AG04449 (cell line): ENCODE measurements at regions of chr11 and their contacts with region 1.

Region 1: DNA sequence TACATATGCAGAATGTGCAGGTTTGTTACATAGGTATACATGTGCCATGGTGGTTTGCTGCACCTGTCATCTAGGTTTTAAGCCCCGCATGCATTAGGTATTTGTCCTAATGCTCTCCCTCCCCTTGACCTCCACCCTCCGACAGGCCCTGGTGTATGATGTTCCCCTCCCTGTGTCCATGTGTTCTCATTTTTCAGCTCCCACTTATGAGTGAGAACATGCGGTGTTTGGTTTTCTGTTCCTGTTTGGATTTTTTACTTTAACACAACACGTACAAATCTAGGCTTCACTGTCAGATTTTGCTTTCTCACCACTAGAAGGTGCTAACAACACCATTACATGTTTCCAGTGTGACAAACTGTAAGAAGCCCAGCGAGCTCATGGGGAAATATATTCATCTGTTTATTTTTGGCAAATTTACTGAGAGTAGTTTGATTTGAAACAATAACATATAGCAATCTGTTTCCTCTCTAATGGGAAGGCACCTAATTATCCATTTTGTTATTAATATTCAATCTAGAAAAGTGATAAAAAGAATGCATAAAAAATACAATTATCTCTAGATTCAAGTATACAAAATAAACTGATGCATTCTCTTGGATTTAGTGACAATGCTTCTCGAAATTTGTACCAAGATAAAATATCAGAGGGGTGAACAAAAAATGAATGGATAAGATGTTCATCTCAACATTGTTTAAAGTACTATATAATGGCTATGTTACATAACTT is 23.2 kb upstream of the BIRC3 start:
- DNase-seq: no peak
- H3K4me3 ChIP-seq: no peak overlapping the region
- CTCF ChIP-seq: peak; percentile 55

Region 2: DNA sequence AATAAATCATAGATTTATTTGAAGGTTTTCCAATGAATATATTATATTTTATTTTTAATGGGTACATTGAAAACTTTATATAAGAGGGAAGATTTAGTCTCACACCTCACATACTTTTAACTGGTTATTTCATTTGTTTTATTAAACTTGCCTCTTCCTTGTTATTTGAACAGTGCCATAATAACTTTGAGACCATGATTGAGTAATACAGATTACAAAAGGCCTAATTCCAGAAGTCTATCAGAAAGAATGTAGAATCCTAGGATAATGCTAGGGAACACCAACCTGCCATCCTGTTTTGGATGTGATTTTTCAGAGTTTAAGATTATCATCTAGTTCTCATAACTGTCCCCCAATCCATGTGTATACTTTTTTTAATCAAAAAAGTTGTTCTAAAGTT is 79.4 kb before region 1 on chr11:
- CTCF ChIA-PET with region 1: no interaction called
- POLR2A ChIA-PET with region 1: no interaction called
- DNase-seq: no peak
- H3K4me3 ChIP-seq: no peak overlapping the region
- CTCF ChIP-seq: no peak

Region 3: DNA sequence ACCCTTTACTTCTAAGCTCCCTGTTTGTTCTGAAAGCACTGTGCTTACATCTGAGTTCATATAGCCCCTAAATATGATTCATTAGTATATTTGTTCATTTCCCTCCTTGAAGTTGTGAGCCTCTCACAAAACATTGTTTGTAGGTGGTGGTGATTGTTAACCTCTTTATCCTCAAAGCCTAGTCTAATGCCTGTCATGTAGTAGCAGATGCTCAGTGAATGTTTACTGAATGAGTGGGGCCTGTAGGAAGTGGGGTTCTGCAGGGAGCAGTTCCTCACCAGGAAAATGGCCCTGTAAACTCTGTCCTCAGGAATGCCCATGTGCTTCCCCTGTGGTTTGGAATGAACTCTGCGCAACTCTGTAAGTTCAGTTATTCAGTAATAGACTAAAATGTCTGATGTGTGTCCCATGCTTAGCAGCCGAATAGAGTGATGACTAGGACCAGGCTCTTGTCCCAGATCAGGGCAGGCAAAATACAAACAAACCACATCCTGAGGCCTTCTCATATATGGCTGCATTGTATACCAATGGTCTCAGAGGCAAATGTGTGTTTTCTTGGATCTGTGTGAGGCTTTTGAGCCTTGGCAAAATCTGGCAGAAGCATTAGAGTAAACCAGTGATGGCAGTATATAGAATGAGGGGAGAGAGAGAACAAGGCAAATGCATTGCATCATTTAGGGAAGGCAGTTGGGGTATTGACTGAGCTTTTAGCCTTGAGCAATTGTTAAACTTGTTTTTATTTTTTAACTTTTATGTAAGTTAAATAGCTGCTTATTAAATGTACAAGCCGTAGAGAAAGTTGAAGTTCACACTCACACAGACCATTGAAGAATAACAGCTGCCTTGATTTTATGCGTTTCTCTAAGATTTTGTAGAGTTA is 68.1 kb before region 1 on chr11:
- CTCF ChIA-PET with region 1: no interaction called
- POLR2A ChIA-PET with region 1: no interaction called
- DNase-seq: peak; percentile 92
- H3K4me3 ChIP-seq: no peak overlapping the region
- CTCF ChIP-seq: no peak

Region 4: DNA sequence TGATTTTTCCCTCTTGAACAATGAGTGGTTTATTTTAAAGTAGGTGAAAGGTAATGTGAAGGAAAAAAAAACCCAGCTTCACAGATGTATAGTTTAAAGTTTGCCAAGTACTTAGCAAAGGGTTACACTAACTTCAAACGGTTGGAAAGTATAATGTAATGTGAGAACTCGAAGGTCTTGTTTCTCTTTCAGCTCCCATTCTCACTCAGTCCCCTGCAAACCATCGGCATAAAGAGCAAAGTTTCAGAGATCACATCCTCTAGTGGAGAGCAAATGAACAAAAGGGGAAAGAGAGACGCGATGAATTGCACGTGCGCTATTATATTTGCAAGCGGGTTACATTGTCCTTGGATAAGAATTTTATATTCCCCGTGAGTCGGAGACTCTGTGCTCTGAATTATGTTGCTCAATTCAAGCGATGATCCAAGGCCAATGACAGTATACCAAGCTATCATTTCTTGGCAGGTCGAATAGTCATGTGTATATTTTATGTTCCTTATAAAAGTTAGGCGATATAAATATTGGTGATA is 14.3 kb before region 1 on chr11:
- CTCF ChIA-PET with region 1: interaction called, 54 read pairs
- POLR2A ChIA-PET with region 1: no interaction called
- DNase-seq: no peak
- H3K4me3 ChIP-seq: no peak overlapping the region
- CTCF ChIP-seq: peak; percentile 28

Region 5: GRCh38 chr11:102306048-102306585 is 12.1 kb after region 1 on chr11:
- CTCF ChIA-PET with region 1: interaction called, 46 read pairs
- POLR2A ChIA-PET with region 1: no interaction called
- DNase-seq: no peak
- H3K4me3 ChIP-seq: no peak overlapping the region
- CTCF ChIP-seq: no peak

Region 6: GRCh38 chr11:102346748-102347461 is 52.9 kb after region 1 on chr11 and contains the start of gene BIRC2:
- CTCF ChIA-PET with region 1: interaction called, 57 read pairs
- POLR2A ChIA-PET with region 1: no interaction called
- DNase-seq: no peak
- H3K4me3 ChIP-seq: peak within 1 kb of the TSS; percentile 82
- CTCF ChIP-seq: peak; percentile 94

Region 7: GRCh38 chr11:102476812-102477211 is 182.8 kb after region 1 on chr11:
- CTCF ChIA-PET with region 1: no interaction called
- POLR2A ChIA-PET with region 1: no interaction called
- DNase-seq: no peak
- H3K4me3 ChIP-seq: no peak overlapping the region
- CTCF ChIP-seq: no peak

Region 8: GRCh38 chr11:102495161-102496042 is 201.4 kb after region 1 on chr11:
- CTCF ChIA-PET with region 1: interaction called, 27 read pairs
- POLR2A ChIA-PET with region 1: no interaction called
- DNase-seq: peak; percentile 67
- H3K4me3 ChIP-seq: no peak overlapping the region
- CTCF ChIP-seq: peak; percentile 46

Region 9: DNA sequence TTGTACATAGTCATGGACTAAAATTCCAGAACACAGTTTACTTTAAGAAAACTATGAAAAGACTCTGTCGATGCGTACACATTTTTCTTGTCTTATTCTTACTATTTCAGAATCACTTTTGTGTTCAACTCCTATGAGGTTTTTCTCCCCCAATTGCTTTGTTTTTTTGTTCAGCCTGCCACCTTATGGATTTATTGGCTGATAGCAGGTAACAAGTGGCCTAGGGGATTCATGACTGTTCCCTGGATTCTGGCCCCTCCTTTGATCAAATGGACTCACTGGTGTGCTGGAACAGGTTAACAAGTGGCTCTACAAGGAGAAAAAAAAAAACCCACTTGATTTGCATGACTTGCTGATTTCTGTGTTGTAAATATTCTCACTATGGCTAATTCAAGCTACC is 320.4 kb after region 1 on chr11:
- CTCF ChIA-PET with region 1: interaction called, 25 read pairs
- POLR2A ChIA-PET with region 1: no interaction called
- DNase-seq: no peak
- H3K4me3 ChIP-seq: no peak overlapping the region
- CTCF ChIP-seq: no peak